IMR-90 (cell line): ENCODE measurements at regions of chr12 and their contacts with region 1.

Region 1: GRCh38 chr12:116703214-116703795 is 34.6 kb downstream of the SPRING1 start:
- DNase-seq: peak; percentile 55
- ATAC-seq: peak; percentile 91
- H3K4me3 ChIP-seq: no peak overlapping the region
- H3K27ac ChIP-seq: no peak overlapping the region
- H3K4me1 ChIP-seq: no peaks in the 10 kb centered on the region
- H3K27me3 ChIP-seq: no peaks in the 10 kb centered on the region; the same call in 1 of the 2 replicates
- CTCF ChIP-seq: peak; percentile 89
- POLR2A ChIP-seq: 0 out of 2 replicates have a peak, but pooled peaks have one; percentile 25
- RAD21 ChIP-seq: peak; percentile 88

Region 2: DNA sequence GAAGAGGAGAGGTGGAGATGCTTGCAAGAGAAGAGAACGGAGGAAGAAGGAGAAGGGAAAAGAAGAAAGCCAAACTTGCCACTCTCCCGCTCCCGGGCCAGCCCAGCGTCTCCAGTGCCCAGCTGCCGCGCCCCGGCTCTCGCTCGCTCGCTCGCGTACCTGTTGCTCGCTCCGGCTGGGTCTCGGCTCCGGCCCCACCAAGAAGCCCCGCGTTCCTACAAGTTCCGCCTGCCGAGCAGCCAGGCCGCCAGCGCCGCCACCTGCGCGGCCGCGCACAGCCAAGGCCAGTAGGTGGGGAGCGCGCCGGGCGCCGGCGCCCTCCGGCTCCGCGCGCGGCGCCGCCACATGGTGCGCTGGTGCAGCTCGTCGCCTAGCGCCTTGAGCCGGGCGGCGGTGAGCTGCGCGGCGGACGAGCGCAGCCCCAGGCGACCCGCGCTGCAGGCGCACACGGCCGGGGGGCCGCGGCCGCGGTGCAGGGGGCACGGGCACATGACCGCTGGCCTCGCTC is 177.6 kb after region 1 on chr12:
- CTCF ChIA-PET with region 1: interaction called, 6 read pairs
- POLR2A ChIA-PET with region 1: no interaction called
- dilution Hi-C with region 1: no loop called
- in situ Hi-C with region 1: no loop called
- intact Hi-C with region 1: loop called (anchors 1 kb)
- DNase-seq: peak; percentile 45
- ATAC-seq: peak; percentile 74
- H3K4me3 ChIP-seq: peak overlapping the region; percentile 31; the same call in 1 of the 2 replicates
- H3K27ac ChIP-seq: no peak overlapping the region
- H3K4me1 ChIP-seq: no peaks in the 10 kb centered on the region
- H3K27me3 ChIP-seq: peaks cover 81% of the 10 kb centered on the region
- CTCF ChIP-seq: no peak
- POLR2A ChIP-seq: no peak
- RAD21 ChIP-seq: no peak

Region 3: GRCh38 chr12:117119592-117120198 is 416.4 kb after region 1 on chr12:
- CTCF ChIA-PET with region 1: no interaction called
- POLR2A ChIA-PET with region 1: no interaction called
- dilution Hi-C with region 1: no loop called
- in situ Hi-C with region 1: loop called (anchors 5 kb)
- intact Hi-C with region 1: loop called (anchors 1 kb)
- DNase-seq: no peak
- ATAC-seq: 0 out of 2 replicates have a peak, but pooled peaks have one; percentile 49
- H3K4me3 ChIP-seq: no peak overlapping the region
- H3K27ac ChIP-seq: no peak overlapping the region
- H3K4me1 ChIP-seq: no peaks in the 10 kb centered on the region
- H3K27me3 ChIP-seq: peaks cover 4% of the 10 kb centered on the region; the same call in 1 of the 2 replicates
- CTCF ChIP-seq: peak; percentile 57
- POLR2A ChIP-seq: no peak
- RAD21 ChIP-seq: peak; percentile 62

Region 4: GRCh38 chr12:117155278-117156060 is 452.2 kb after region 1 on chr12:
- CTCF ChIA-PET with region 1: no interaction called
- POLR2A ChIA-PET with region 1: no interaction called
- dilution Hi-C with region 1: no loop called
- in situ Hi-C with region 1: no loop called
- intact Hi-C with region 1: loop called (anchors 10 kb)
- DNase-seq: peak; percentile 11
- ATAC-seq: peak; percentile 55
- H3K4me3 ChIP-seq: no peak overlapping the region
- H3K27ac ChIP-seq: no peak overlapping the region
- H3K4me1 ChIP-seq: no peaks in the 10 kb centered on the region
- H3K27me3 ChIP-seq: no peaks in the 10 kb centered on the region
- CTCF ChIP-seq: peak; percentile 48
- POLR2A ChIP-seq: no peak
- RAD21 ChIP-seq: no peak

Region 5: GRCh38 chr12:117836999-117837736 is 1133.9 kb after region 1 on chr12:
- CTCF ChIA-PET with region 1: interaction called, 3 read pairs
- POLR2A ChIA-PET with region 1: no interaction called
- dilution Hi-C with region 1: no loop called
- in situ Hi-C with region 1: no loop called
- intact Hi-C with region 1: loop called (anchors 5 kb)
- DNase-seq: peak; percentile 60
- ATAC-seq: peak; percentile 90
- H3K4me3 ChIP-seq: no peak overlapping the region
- H3K27ac ChIP-seq: no peak overlapping the region
- H3K4me1 ChIP-seq: no peaks in the 10 kb centered on the region
- H3K27me3 ChIP-seq: no peaks in the 10 kb centered on the region
- CTCF ChIP-seq: peak; percentile 86
- POLR2A ChIP-seq: no peak
- RAD21 ChIP-seq: peak; percentile 85